ENCODE measurements at regions of chr18 and their contacts with region 1.

Region 1: GRCh38 chr18:42114310-42114943 is 159.4 kb downstream of the PIK3C3 start:
- DNase-seq: peak; percentile 76
- ATAC-seq: peak; percentile 86
- H3K4me3 Mint-ChIP-seq: no peak overlapping the region
- H3K27ac Mint-ChIP-seq: peak overlapping the region; percentile 65
- H3K4me1 Mint-ChIP-seq: peaks cover 12% of the 10 kb centered on the region
- H3K27me3 Mint-ChIP-seq: peaks cover 8% of the 10 kb centered on the region

Region 2: DNA sequence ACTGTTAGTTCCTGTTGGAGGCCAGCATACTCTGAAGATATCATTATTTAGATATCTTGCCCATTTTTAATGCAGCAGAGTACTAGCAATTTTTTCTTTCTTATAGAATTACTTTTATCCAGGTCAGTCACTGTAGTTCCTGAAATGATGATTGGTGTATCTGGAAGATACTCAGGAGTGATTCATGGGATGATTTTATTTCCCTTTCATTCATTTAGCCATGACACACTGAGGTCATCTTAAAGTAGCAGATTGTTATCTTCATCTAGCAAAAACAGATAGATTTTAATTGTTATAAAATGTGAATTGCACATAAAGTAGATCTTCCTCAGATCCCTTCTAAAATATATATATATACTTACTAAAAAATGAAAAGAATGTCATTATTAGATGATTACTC is 50.3 kb before region 1 on chr18:
- CTCF ChIA-PET with region 1: interaction called, 11 read pairs
- POLR2A ChIA-PET with region 1: no interaction called
- DNase-seq: no peak
- ATAC-seq: no peak
- H3K4me3 Mint-ChIP-seq: no peak overlapping the region
- H3K27ac Mint-ChIP-seq: no peak overlapping the region
- H3K4me1 Mint-ChIP-seq: no peaks in the 10 kb centered on the region
- H3K27me3 Mint-ChIP-seq: no peaks in the 10 kb centered on the region

Region 3: GRCh38 chr18:42100911-42101310 is 13.5 kb before region 1 on chr18:
- CTCF ChIA-PET with region 1: interaction called, 35 read pairs
- POLR2A ChIA-PET with region 1: no interaction called
- DNase-seq: no peak
- ATAC-seq: no peak
- H3K4me3 Mint-ChIP-seq: no peak overlapping the region
- H3K27ac Mint-ChIP-seq: no peak overlapping the region
- H3K4me1 Mint-ChIP-seq: no peaks in the 10 kb centered on the region
- H3K27me3 Mint-ChIP-seq: peaks cover 4% of the 10 kb centered on the region

Region 4: GRCh38 chr18:42274488-42275137 is 160.2 kb after region 1 on chr18:
- CTCF ChIA-PET with region 1: interaction called, 24 read pairs
- POLR2A ChIA-PET with region 1: no interaction called
- DNase-seq: no peak
- ATAC-seq: no peak
- H3K4me3 Mint-ChIP-seq: no peak overlapping the region
- H3K27ac Mint-ChIP-seq: no peak overlapping the region
- H3K4me1 Mint-ChIP-seq: no peaks in the 10 kb centered on the region
- H3K27me3 Mint-ChIP-seq: no peaks in the 10 kb centered on the region

Region 5: GRCh38 chr18:43271593-43272432 is 1157.4 kb after region 1 on chr18:
- CTCF ChIA-PET with region 1: interaction called, 64 read pairs
- POLR2A ChIA-PET with region 1: no interaction called
- DNase-seq: peak; percentile 42
- ATAC-seq: no peak
- H3K4me3 Mint-ChIP-seq: no peak overlapping the region
- H3K27ac Mint-ChIP-seq: no peak overlapping the region
- H3K4me1 Mint-ChIP-seq: no peaks in the 10 kb centered on the region
- H3K27me3 Mint-ChIP-seq: no peaks in the 10 kb centered on the region